Dorsolateral prefrontal cortex (tissue), 120 donors: ENCODE measurements at regions of chr1 and their contacts with region 1.

Region 1: GRCh38 chr1:234125283-234125682 is 220.8 kb downstream of the SLC35F3 start:
- DNase-seq: no peak
- H3K4me3 ChIP-seq: no peak overlapping the region
- H3K27ac ChIP-seq: no peak overlapping the region
- H3K27me3 ChIP-seq: peaks cover 0 to 28% (median 0%) of the 10 kb centered on the region in 45 donors
- CTCF ChIP-seq: peak in 2 of 56 donors; percentile 17 to 20

Region 2: DNA sequence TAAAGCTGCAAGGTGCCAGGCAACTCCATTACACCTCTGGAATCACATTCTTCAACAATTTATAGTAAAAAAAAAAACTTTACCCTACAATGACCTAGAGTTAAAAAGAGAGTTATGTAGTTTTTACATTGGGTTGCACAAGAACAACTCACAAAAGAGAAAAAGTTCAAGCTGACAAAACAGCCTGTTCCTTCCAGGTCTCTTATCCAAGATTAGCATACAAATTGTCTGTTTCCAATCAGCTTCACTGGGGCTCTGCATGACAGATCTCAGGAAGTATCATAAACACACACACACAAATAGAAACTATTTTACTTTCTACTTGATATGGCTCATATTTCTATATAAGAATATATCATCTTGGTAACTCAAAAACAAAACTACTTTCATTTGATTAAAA is 984.3 kb before region 1 on chr1:
- intact Hi-C with region 1: no loop called
- DNase-seq: no peak
- H3K4me3 ChIP-seq: no peak overlapping the region
- H3K27ac ChIP-seq: no peak overlapping the region
- H3K27me3 ChIP-seq: no peaks in the 10 kb centered on the region
- CTCF ChIP-seq: no peak

Region 3: DNA sequence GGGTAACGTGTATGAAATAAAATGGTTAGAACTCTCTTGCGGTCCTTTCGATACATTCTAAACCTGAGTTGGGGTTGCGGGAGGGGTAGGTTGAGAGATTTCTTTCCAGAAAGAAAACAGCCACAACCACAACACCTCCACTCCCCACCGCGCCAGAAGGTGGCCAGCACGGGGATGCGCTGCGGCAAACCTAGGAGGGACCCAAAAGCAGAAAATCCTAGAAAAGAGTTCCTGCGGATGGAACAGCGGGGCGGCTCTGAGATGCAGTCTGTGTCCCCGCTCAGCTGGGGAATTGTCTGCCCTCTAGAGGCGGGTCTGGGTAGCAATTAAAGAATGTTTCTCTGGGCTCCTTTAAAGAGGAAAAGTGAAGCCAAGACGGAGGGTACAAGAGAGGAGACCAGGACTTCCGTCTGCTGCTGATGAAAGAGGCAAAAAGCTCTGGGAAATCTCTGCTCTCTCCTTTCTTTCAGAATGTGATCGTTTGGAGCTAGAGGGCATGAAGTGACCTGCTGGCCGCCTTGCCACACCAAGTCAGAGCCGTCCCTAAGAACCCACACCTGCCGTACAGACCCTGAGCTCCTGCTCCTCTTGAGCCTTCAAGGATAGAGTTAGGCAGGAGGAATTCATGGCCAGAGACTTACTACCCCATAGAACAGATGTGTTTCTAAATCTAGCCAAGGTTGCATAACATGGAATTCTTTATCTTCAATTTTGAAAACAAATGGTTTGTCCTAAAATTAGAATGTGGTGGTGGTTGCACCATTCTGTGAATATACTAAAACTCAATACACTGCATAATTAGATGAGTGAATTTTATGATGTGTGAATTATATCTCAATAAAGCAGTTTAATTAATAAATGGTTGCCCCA is 201.4 kb after region 1 on chr1:
- intact Hi-C with region 1: loop called in 1 of 2 experiments (anchors 10 kb)
- DNase-seq: peak in 4 of 10 donors; percentile 40 to 69 (median 58)
- H3K4me3 ChIP-seq: peak overlapping the region in 43 of 59 donors; percentile 10 to 61 (median 35)
- H3K27ac ChIP-seq: peak overlapping the region in 41 of 59 donors; percentile 2 to 77 (median 46)
- H3K27me3 ChIP-seq: peaks cover 0 to 7% (median 0%) of the 10 kb centered on the region in 45 donors
- CTCF ChIP-seq: peak; percentile 27 to 84 (median 73)